Head of caudate nucleus (tissue), 42 donors: ENCODE measurements at regions of chr14 and their contacts with region 1.

Region 1: GRCh38 chr14:54691525-54692283 is 124.8 kb downstream of the SAMD4A start:
- DNase-seq: peak; percentile 59 to 90 (median 78)

Region 2: GRCh38 chr14:54424479-54424901 is 267.2 kb before region 1 on chr14:
- intact Hi-C with region 1: no loop called
- DNase-seq: no peak

Region 3: GRCh38 chr14:54572316-54572715 is 119.4 kb before region 1 on chr14:
- intact Hi-C with region 1: loop called (anchors 5 kb)
- DNase-seq: no peak

Region 4: GRCh38 chr14:54955143-54955542 is 263.4 kb after region 1 on chr14:
- intact Hi-C with region 1: no loop called
- DNase-seq: no peak